ENCODE measurements at regions of chr14 and their contacts with region 1.

Region 1: DNA sequence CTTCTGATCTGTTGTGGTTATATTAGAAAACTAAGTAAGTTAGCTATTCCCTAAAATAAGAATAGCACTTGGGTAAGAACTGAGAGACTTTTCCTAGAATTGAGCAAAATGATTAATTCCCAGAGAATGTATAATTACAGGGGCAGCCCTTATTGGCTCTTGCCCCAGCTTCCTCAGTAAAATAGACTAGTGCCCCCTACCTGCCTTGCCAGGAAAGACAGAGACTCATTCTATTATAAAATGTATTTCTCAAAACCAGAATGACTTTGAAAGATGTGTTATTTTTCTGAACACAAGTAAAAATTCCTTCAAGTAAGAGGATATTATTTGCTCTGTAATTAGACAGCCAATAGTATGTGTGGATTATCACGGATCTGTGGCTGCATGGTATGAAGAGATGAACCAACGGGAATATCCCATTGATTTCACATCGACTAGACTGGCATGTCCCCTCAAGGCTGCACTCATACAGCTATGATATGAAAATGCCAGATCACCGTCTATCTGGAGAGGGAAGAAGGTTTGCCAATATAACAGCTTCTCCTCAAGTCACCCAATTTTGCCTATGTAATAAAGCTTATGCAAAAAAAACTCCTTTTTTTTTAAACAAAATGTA is 7.4 kb upstream of the GLRX5 start:
- DNase-seq: peak; percentile 58
- ATAC-seq: peak; percentile 6; the same call in 1 of the 2 replicates
- H3K4me3 ChIP-seq: no peak overlapping the region
- H3K27ac ChIP-seq: no peak overlapping the region
- H3K4me1 ChIP-seq: peaks cover 45% of the 10 kb centered on the region
- H3K27me3 ChIP-seq: no peaks in the 10 kb centered on the region
- CTCF ChIP-seq: peak; percentile 87

Region 2: GRCh38 chr14:95117937-95118721 is 409.4 kb before region 1 on chr14:
- CTCF ChIA-PET with region 1: no interaction called
- POLR2A ChIA-PET with region 1: interaction called, 17 read pairs
- intact Hi-C with region 1: no loop called
- DNase-seq: no peak
- ATAC-seq: no peak
- H3K4me3 ChIP-seq: no peak overlapping the region
- H3K27ac ChIP-seq: no peak overlapping the region
- H3K4me1 ChIP-seq: peaks cover 6% of the 10 kb centered on the region; the same call in 1 of the 2 replicates
- H3K27me3 ChIP-seq: no peaks in the 10 kb centered on the region
- CTCF ChIP-seq: no peak

Region 3: GRCh38 chr14:95472819-95473251 is 54.7 kb before region 1 on chr14:
- CTCF ChIA-PET with region 1: no interaction called
- POLR2A ChIA-PET with region 1: no interaction called
- intact Hi-C with region 1: no loop called
- DNase-seq: no peak
- ATAC-seq: no peak
- H3K4me3 ChIP-seq: no peak overlapping the region
- H3K27ac ChIP-seq: no peak overlapping the region
- H3K4me1 ChIP-seq: no peaks in the 10 kb centered on the region; the same call in 1 of the 2 replicates
- H3K27me3 ChIP-seq: no peaks in the 10 kb centered on the region
- CTCF ChIP-seq: no peak

Measured in PC-3 (cell line).